ENCODE measurements at regions of chr6 and their contacts with region 1.

Region 1: DNA sequence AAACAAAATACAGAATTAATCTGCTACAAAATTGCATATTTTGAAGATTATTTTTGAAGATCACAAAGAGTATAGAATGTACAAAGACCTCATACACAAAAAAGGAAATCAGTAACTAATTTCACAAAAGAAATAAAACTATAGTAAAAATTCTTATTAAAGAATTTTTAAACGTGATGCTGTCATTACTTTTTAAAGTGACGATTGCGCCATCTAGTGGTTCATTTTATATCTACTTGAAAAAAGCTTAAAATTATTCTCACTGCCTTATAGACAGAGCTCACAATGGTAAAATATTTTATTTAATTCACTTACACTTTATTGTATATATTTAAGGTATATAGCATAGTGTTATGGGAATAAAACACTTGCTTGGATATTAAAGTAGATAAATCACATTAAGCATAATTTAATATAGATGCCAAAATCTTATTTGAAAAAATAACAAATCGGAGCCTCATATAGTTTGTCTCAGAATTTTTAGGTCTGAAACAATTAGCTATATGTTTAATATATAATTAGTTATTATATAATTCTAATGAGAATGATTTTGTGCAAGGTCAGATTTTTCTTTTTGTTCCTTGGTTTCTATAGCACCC is 128.8 kb downstream of the PHF3 start:
- DNase-seq: peak; percentile 52
- ATAC-seq: peak; percentile 64
- H3K4me3 ChIP-seq: no peak overlapping the region
- H3K27ac ChIP-seq: no peak overlapping the region
- H3K4me1 ChIP-seq: no peaks in the 10 kb centered on the region
- H3K27me3 ChIP-seq: peaks cover 4% of the 10 kb centered on the region
- CTCF ChIP-seq: peak; percentile 61
- POLR2A ChIP-seq: no peak
- RAD21 ChIP-seq: peak; percentile 59

Region 2: GRCh38 chr6:63307581-63308246 is 456.7 kb before region 1 on chr6:
- CTCF ChIA-PET with region 1: no interaction called
- POLR2A ChIA-PET with region 1: no interaction called
- dilution Hi-C with region 1: no loop called
- in situ Hi-C with region 1: no loop called
- intact Hi-C with region 1: loop called (anchors 2 kb)
- DNase-seq: peak; percentile 64
- ATAC-seq: peak; percentile 91
- H3K4me3 ChIP-seq: no peak overlapping the region
- H3K27ac ChIP-seq: no peak overlapping the region
- H3K4me1 ChIP-seq: no peaks in the 10 kb centered on the region
- H3K27me3 ChIP-seq: no peaks in the 10 kb centered on the region
- CTCF ChIP-seq: peak; percentile 63
- POLR2A ChIP-seq: no peak
- RAD21 ChIP-seq: peak; percentile 69

Region 3: GRCh38 chr6:63598049-63599036 is 166.1 kb before region 1 on chr6:
- CTCF ChIA-PET with region 1: interaction called, 11 read pairs
- POLR2A ChIA-PET with region 1: no interaction called
- dilution Hi-C with region 1: no loop called
- in situ Hi-C with region 1: loop called (anchors 5 kb)
- intact Hi-C with region 1: loop called (anchors 1 kb)
- DNase-seq: peak; percentile 49
- ATAC-seq: peak; percentile 97
- H3K4me3 ChIP-seq: peak overlapping the region; percentile 66
- H3K27ac ChIP-seq: no peak overlapping the region
- H3K4me1 ChIP-seq: no peaks in the 10 kb centered on the region
- H3K27me3 ChIP-seq: no peaks in the 10 kb centered on the region
- CTCF ChIP-seq: peak; percentile 77
- POLR2A ChIP-seq: no peak
- RAD21 ChIP-seq: peak; percentile 76

Region 4: GRCh38 chr6:63997217-63997616 is 232.8 kb after region 1 on chr6:
- CTCF ChIA-PET with region 1: no interaction called
- POLR2A ChIA-PET with region 1: no interaction called
- dilution Hi-C with region 1: no loop called
- in situ Hi-C with region 1: no loop called
- intact Hi-C with region 1: no loop called
- DNase-seq: no peak
- ATAC-seq: no peak
- H3K4me3 ChIP-seq: no peak overlapping the region
- H3K27ac ChIP-seq: no peak overlapping the region
- H3K4me1 ChIP-seq: no peaks in the 10 kb centered on the region
- H3K27me3 ChIP-seq: no peaks in the 10 kb centered on the region
- CTCF ChIP-seq: no peak
- POLR2A ChIP-seq: no peak
- RAD21 ChIP-seq: no peak

Measured in IMR-90 (cell line).